ENCODE measurements at regions of chr15 and their contacts with region 1.

Region 1: GRCh38 chr15:62455441-62455921 is 290.4 kb upstream of the C2CD4B start:
- DNase-seq: peak; percentile 58 to 68
- ATAC-seq: peak; percentile 40 to 75
- H3K4me3 ChIP-seq: peak overlapping the region in 3 of 4 donors; percentile 1 to 37 (median 27)
- H3K27ac ChIP-seq: peak overlapping the region; percentile 84 to 90 (median 88)
- H3K4me1 ChIP-seq: peaks cover 57 to 61% of the 10 kb centered on the region in 2 donors
- H3K27me3 ChIP-seq: no peaks in the 10 kb centered on the region
- CTCF ChIP-seq: no peak
- POLR2A ChIP-seq: no peak

Region 2: GRCh38 chr15:62087671-62088352 is 367.7 kb before region 1 on chr15:
- in situ Hi-C with region 1: no loop called
- intact Hi-C with region 1: no loop called
- DNase-seq: no peak
- ATAC-seq: peak; percentile 21 to 33
- H3K4me3 ChIP-seq: no peak overlapping the region
- H3K27ac ChIP-seq: no peak overlapping the region
- H3K4me1 ChIP-seq: no peaks in the 10 kb centered on the region
- H3K27me3 ChIP-seq: no peaks in the 10 kb centered on the region
- CTCF ChIP-seq: no peak
- POLR2A ChIP-seq: no peak

Region 3: DNA sequence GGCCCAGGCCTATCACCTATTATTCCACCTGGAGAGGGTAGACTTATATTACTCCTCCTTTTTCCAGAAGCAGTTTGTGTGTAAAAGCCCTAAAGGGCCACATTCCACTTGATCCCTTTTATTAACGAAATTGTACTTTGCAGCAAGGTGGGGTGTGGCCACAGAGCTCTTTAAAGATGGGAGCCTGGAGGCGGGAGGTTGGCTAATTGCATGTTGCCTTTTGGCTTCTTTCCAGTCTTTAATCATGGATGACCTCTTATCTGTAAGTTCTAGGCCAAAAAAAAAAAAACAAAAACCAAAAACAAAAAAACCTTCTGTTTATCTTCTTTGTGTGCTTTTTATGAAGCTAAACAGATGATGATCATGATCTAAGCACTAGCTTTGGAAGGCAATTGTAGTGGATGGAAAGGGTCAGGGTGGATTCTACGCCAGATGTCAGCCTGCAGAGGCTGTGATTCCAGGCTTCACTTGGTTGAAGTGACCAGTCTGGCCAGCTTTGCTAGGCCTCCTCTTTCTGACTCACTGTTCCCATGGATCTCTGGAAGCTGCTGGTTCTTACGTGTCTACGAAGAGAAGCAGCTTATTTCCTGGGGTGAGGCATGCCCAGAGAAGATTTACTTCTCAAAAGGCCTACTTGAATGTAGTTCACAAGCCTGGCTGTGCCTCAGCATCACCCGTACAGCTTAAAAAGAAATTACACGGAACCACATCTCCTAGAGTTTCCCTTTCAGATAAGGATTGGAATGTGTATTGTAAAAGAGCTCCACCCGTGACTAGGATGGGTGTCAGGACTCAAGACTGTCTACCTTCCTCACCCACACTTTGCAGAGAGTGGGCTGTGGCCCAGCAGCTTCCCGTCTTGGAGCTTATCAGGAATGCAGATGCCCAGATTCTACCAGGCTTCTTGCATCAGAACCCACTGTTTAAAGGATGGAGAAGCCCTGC is 40.5 kb after region 1 on chr15:
- in situ Hi-C with region 1: no loop called
- intact Hi-C with region 1: no loop called
- DNase-seq: peak in 1 of 2 donors; percentile 40
- ATAC-seq: peak; percentile 64 to 76
- H3K4me3 ChIP-seq: no peak overlapping the region
- H3K27ac ChIP-seq: peak overlapping the region in 2 of 4 donors; percentile 11 to 24
- H3K4me1 ChIP-seq: peaks cover 12 to 31% of the 10 kb centered on the region in 2 donors
- H3K27me3 ChIP-seq: no peaks in the 10 kb centered on the region
- CTCF ChIP-seq: no peak
- POLR2A ChIP-seq: no peak

Region 4: GRCh38 chr15:62649793-62650420 is 194.4 kb after region 1 on chr15:
- in situ Hi-C with region 1: no loop called
- intact Hi-C with region 1: loop called (anchors 5 kb)
- DNase-seq: peak in 1 of 2 donors; percentile 52
- ATAC-seq: peak in 1 of 2 donors; percentile 65
- H3K4me3 ChIP-seq: no peak overlapping the region
- H3K27ac ChIP-seq: peak overlapping the region; percentile 19 to 69 (median 51)
- H3K4me1 ChIP-seq: peaks cover 19 to 39% of the 10 kb centered on the region in 2 donors
- H3K27me3 ChIP-seq: no peaks in the 10 kb centered on the region
- CTCF ChIP-seq: no peak
- POLR2A ChIP-seq: no peak

Measured in gastrocnemius medialis (tissue), 4 donors.